Right ventricle myocardium inferior (tissue), 1 donor: ENCODE measurements at regions of chr1 and their contacts with region 1.

Region 1: DNA sequence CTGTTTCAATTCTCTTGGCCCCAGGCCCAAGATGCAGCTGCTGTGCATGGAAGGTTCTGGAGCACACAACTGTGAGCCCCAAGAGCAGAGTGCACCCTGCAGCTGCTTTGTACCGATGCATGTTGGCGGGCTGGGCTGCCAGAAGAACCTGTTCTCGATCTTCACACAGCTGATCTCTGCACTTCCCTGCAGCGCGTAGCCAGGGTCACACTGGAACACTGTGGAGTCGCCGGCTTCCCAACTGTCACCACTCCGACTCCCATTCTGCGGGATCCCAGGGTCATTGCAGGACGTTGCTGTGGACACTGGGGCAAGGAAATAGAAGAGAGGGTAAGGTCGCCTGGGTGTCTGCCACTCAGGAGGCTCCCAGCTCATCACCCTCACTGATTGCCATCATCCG is 185.4 kb downstream of the ZSCAN20 start:
- DNase-seq: no peak
- ATAC-seq: peak; percentile 64

Region 2: DNA sequence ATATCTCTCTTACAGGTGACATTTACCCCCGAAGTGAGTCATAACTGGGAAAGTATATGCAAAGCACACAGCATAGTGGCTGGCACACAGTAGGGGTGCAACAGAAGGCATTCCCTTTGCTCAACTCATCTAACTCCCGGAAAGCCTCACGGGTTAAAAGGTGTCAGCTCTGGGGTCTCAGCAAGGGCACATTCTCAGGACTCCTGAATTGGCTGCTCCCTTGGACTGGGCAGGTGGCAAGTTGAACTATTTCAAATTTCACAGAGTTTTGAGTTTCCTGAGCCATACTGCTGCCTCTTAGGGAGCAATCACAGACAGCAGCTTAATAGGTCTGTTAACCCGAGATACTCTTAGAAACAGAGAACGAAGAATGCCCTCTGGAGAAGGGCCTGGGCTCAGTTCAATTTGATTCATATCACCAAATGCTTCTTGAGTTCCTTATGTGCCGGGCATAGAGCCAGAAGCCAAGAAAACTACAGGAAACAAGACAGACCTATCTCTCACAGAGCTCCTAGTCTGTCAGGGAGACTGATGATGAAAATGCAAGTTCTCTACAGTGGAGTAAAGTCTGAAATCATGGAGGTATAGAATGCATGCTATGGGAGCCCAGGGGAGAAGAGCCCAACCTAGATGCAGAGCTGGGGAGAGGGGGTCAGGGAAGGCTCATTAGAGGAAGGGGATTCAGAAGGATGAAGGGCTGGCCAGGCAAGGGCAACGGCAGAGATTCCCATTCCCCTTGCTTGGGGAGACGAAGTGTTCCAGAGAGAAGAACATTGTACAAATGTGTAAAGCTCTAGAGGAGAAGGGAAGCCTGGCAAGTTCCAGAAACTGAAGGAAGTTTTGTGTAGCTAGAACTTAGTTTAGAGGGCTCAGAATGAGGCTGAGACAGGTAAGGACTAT is 62.2 kb after region 1 on chr1:
- intact Hi-C with region 1: loop called (anchors 2 kb)
- DNase-seq: no peak
- ATAC-seq: no peak

Region 3: DNA sequence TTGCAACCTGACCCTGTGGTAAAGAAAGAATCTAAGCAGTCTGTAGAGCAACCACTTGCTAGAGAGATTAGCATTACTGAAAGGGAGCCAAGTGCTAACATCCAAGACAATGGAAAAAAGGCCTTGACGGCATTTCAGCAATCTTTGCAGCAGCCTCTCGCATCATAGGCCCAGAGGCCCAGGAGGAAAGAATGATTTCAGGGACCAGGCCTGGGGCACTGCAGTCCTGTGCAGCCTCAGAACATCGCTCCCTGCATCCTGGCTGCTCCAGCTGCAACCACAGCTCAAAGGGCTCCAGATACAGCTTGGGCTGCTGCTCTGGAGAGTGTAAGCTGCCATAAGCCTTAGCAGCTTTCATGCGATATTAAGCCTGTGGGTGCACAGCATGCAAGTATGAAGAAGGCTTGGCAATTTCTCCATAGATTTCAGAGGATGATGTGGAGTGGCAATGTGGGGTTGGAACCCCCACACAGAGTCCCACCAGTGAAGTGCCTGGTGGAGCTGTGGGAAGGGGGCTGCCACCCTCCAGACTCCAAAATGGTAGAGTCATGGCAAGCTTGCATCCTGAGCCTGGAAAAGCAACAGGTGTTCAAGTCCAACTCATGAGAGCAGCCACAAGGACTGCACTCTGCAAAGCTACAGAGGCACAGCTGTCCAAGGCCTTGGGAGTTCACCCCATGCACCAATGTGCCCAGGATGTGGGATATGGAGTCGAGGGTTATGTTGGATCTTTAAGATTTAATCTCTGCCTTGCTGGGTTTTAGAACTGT is 95.4 kb after region 1 on chr1:
- intact Hi-C with region 1: no loop called
- DNase-seq: no peak
- ATAC-seq: no peak